ENCODE measurements at regions of chr13 and their contacts with region 1.

Region 1: GRCh38 chr13:73058736-73059459 is at the start of gene KLF5:
- DNase-seq: peak; percentile 85 to 96 (median 93)
- ATAC-seq: peak; percentile 95
- H3K4me3 ChIP-seq: peak within 1 kb of the TSS; percentile 53 to 54
- H3K4me3 Mint-ChIP-seq: peak within 1 kb of the TSS; percentile 93
- H3K27ac ChIP-seq: no peak within 1 kb of the TSS
- H3K27ac Mint-ChIP-seq: peak within 1 kb of the TSS; percentile 72
- H3K4me1 ChIP-seq: peaks cover 14% of the 10 kb centered on the region
- H3K4me1 Mint-ChIP-seq: peaks cover 21% of the 10 kb centered on the region
- H3K27me3 ChIP-seq: peaks cover 11 to 12% of the 10 kb centered on the region in 2 experiments
- H3K27me3 Mint-ChIP-seq: peaks cover 40% of the 10 kb centered on the region
- CTCF ChIP-seq: no peak
- total RNA-seq, gene KLF5: 3.4 to 3.7 TPM

Region 2: GRCh38 chr13:72781451-72782439 is 277.2 kb before region 1 on chr13 and contains the starts of genes DIS3 and PIBF1:
- CTCF ChIA-PET with region 1: no interaction called
- POLR2A ChIA-PET with region 1: no interaction called
- intact Hi-C with region 1: loop called in 1 of 2 experiments (anchors 5 kb)
- DNase-seq: peak; percentile 88 to 98 (median 93)
- ATAC-seq: peak; percentile 96
- H3K4me3 ChIP-seq: peak within 1 kb of the TSS; percentile 83 to 96
- H3K4me3 Mint-ChIP-seq: peak within 1 kb of the TSS; percentile 97
- H3K27ac ChIP-seq: peak within 1 kb of the TSS; percentile 88 to 91
- H3K27ac Mint-ChIP-seq: peak within 1 kb of the TSS; percentile 97
- H3K4me1 ChIP-seq: peaks cover 48% of the 10 kb centered on the region
- H3K4me1 Mint-ChIP-seq: peaks cover 70% of the 10 kb centered on the region
- H3K27me3 ChIP-seq: no peaks in the 10 kb centered on the region
- H3K27me3 Mint-ChIP-seq: no peaks in the 10 kb centered on the region
- CTCF ChIP-seq: no peak
- total RNA-seq, gene DIS3: 60.8 to 64.5 TPM
- total RNA-seq, gene PIBF1: 13.1 to 14.3 TPM

Region 3: GRCh38 chr13:73107481-73107880 is 48.6 kb after region 1 on chr13:
- CTCF ChIA-PET with region 1: no interaction called
- POLR2A ChIA-PET with region 1: no interaction called
- intact Hi-C with region 1: no loop called
- DNase-seq: no peak
- ATAC-seq: no peak
- H3K4me3 ChIP-seq: no peak overlapping the region
- H3K4me3 Mint-ChIP-seq: no peak overlapping the region
- H3K27ac ChIP-seq: no peak overlapping the region
- H3K27ac Mint-ChIP-seq: no peak overlapping the region
- H3K4me1 ChIP-seq: no peaks in the 10 kb centered on the region
- H3K4me1 Mint-ChIP-seq: no peaks in the 10 kb centered on the region
- H3K27me3 ChIP-seq: no peaks in the 10 kb centered on the region
- H3K27me3 Mint-ChIP-seq: peaks cover 3% of the 10 kb centered on the region
- CTCF ChIP-seq: no peak

Region 4: GRCh38 chr13:73715114-73715910 is 656.4 kb after region 1 on chr13:
- CTCF ChIA-PET with region 1: interaction called, 3 read pairs
- POLR2A ChIA-PET with region 1: no interaction called
- intact Hi-C with region 1: loop called in 1 of 2 experiments (anchors 10 kb)
- DNase-seq: peak in 8 of 9 experiments; percentile 35 to 94 (median 58)
- ATAC-seq: peak; percentile 84
- H3K4me3 ChIP-seq: peak overlapping the region in 1 of 2 experiments; percentile 15
- H3K4me3 Mint-ChIP-seq: peak overlapping the region; percentile 67
- H3K27ac ChIP-seq: peak overlapping the region; percentile 22 to 84
- H3K27ac Mint-ChIP-seq: peak overlapping the region; percentile 94
- H3K4me1 ChIP-seq: peaks cover 37% of the 10 kb centered on the region
- H3K4me1 Mint-ChIP-seq: peaks cover 46% of the 10 kb centered on the region
- H3K27me3 ChIP-seq: no peaks in the 10 kb centered on the region
- H3K27me3 Mint-ChIP-seq: no peaks in the 10 kb centered on the region
- CTCF ChIP-seq: no peak